Activated naive CD4-positive, alpha-beta T cell treated with anti-CD3 and anti-CD28 coated beads for 36 hours (primary cell): ENCODE measurements at regions of chr2 and their contacts with region 1.

Region 1: DNA sequence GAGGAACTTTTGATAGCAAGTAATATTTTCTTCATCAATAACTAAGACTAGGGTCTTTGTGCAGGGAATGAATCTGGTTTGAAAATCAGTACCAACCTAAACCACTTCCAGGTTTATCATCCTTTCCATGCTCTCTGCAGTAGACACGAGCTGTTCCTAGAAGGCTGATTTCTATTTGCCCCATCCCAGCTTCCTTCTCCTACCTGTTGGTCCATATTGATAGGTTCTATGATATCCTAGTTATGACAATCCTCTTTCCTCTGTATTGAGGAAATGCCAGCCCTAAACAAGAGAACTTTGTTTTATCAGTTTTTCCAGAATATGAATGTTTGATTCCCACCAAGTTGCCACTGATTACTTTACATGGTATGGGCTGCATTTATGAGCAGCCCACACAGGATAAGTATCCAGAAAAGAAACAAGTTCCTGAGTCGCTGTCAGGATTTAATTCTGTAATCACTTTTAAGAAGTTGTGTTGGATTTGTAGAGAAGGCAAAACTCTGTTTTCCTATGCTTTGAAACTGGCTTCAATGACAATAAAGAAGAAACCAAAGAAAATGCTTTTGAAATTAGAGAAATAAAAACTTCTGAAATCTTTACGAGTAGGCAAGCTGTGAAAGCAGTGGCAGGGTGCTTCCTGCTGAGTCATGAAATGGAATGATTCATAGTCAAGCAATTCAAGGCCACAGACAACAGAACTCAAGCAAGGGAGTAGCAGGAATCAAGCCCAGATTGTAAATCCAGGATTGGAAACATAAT is 37.3 kb upstream of the TANK start:
- DNase-seq: peak; percentile 70
- H3K4me3 Mint-ChIP-seq: no peak overlapping the region
- H3K27ac Mint-ChIP-seq: peak overlapping the region; percentile 3
- H3K4me1 Mint-ChIP-seq: peaks cover 20% of the 10 kb centered on the region
- H3K27me3 Mint-ChIP-seq: peaks cover 3% of the 10 kb centered on the region

Region 2: DNA sequence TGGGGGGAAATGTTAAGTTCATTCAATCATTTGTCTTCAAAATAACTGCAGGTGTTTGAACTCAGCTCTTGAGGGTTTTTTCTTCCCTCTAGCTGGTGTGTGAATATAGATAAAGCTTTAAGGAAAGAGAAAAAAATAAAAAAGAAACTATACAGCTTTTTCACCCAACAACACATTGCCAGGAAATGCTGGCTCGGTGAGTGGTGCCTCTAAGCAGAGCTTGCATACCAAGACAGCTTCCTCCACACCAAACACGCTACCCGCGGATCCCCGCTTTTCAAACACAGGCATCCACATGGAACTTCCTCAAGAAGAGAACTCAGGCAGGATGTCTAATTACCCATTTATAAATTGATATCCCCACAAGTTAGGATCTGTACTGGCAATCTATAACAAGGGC is 32.5 kb before region 1 on chr2:
- CTCF ChIA-PET with region 1: interaction called, 3 read pairs
- intact Hi-C with region 1: loop called (anchors 1 kb)
- DNase-seq: peak; percentile 74
- H3K4me3 Mint-ChIP-seq: no peak overlapping the region
- H3K27ac Mint-ChIP-seq: peak overlapping the region; percentile 68
- H3K4me1 Mint-ChIP-seq: peaks cover 33% of the 10 kb centered on the region
- H3K27me3 Mint-ChIP-seq: no peaks in the 10 kb centered on the region

Region 3: DNA sequence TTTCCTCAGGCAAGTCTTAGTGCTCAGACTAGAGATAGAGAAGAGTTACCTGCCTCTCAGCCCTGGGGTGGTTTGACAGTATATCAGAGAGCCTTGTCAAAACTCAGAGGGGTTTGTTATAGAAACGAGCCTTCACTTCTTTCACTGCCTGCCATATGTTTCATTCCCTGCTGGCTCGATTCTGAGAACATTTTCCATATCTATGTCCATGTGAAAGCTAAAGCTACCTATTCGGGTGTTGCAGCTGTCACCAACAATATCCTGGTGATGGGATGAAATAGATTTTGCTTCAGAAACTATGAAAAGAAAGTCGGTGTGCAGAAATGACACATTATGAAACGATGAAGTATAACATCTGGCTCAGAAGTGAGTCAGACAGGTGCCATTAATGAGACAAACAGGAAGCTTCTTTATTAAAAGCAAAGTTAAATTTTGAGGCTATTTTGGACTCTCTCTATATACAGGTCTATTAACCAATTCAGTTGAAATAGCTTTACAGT is 18.8 kb before region 1 on chr2:
- CTCF ChIA-PET with region 1: interaction called, 11 read pairs
- intact Hi-C with region 1: loop called (anchors 1 kb)
- DNase-seq: peak; percentile 35
- H3K4me3 Mint-ChIP-seq: no peak overlapping the region
- H3K27ac Mint-ChIP-seq: peak overlapping the region; percentile 54
- H3K4me1 Mint-ChIP-seq: peaks cover 34% of the 10 kb centered on the region
- H3K27me3 Mint-ChIP-seq: peaks cover 3% of the 10 kb centered on the region

Region 4: GRCh38 chr2:161965994-161966393 is 843.0 kb after region 1 on chr2:
- CTCF ChIA-PET with region 1: no interaction called
- intact Hi-C with region 1: loop called (anchors 5 kb)
- DNase-seq: no peak
- H3K4me3 Mint-ChIP-seq: no peak overlapping the region
- H3K27ac Mint-ChIP-seq: no peak overlapping the region
- H3K4me1 Mint-ChIP-seq: peaks cover 28% of the 10 kb centered on the region
- H3K27me3 Mint-ChIP-seq: no peaks in the 10 kb centered on the region